Endothelial cell of umbilical vein (primary cell): ENCODE measurements at regions of chr2 and their contacts with region 1.

Region 1: DNA sequence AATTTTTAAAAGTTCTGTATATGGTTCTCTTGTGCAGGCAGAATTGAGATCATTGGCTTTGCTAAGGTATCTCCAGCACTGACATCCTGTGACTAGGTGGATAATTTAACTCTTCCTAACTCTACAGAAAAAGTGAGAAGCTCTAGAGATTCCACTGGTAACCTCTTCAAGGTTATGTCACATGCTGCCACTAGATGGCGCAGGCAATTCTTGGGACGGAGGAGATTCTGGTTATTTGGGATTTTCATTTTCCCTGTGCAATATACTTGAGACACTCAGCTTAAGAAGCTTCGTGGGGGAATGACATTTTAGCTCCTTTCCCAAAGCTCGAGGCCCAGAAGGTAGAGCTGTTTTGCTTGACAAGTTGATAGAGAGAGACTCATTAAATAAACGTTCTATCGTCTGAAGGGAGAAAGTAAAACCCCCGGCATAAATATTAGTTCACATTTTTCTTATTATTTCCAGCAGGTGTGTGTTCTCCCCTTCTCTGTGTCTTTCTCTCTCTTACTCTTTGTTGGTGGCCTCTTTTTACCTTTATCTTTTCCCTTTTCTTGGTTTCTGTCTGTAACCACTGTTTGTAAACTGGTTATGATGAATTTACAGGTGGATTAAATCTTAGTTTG is 26.6 kb upstream of the LANCL1 start:
- DNase-seq: peak; percentile 55
- H3K4me3 ChIP-seq: peak overlapping the region in 1 of 3 experiments; percentile 16
- H3K27ac ChIP-seq: no peak overlapping the region
- H3K4me1 ChIP-seq: no peaks in the 10 kb centered on the region
- H3K27me3 ChIP-seq: peaks cover 0 to 8% of the 10 kb centered on the region in 2 experiments
- CTCF ChIP-seq: peak; percentile 76 to 89
- POLR2A ChIP-seq: no peak

Region 2: GRCh38 chr2:210356944-210357343 is 146.2 kb before region 1 on chr2:
- CTCF ChIA-PET with region 1: no interaction called
- POLR2A ChIA-PET with region 1: no interaction called
- dilution Hi-C with region 1: no loop called
- intact Hi-C with region 1: no loop called
- DNase-seq: no peak
- H3K4me3 ChIP-seq: no peak overlapping the region
- H3K27ac ChIP-seq: no peak overlapping the region
- H3K4me1 ChIP-seq: no peaks in the 10 kb centered on the region
- H3K27me3 ChIP-seq: no peaks in the 10 kb centered on the region
- CTCF ChIP-seq: no peak
- POLR2A ChIP-seq: no peak

Region 3: GRCh38 chr2:210519594-210519993 is 16.5 kb after region 1 on chr2:
- CTCF ChIA-PET with region 1: interaction called, 12 read pairs
- POLR2A ChIA-PET with region 1: no interaction called
- dilution Hi-C with region 1: no loop called
- intact Hi-C with region 1: no loop called
- DNase-seq: no peak
- H3K4me3 ChIP-seq: no peak overlapping the region
- H3K27ac ChIP-seq: no peak overlapping the region
- H3K4me1 ChIP-seq: no peaks in the 10 kb centered on the region
- H3K27me3 ChIP-seq: no peaks in the 10 kb centered on the region
- CTCF ChIP-seq: no peak
- POLR2A ChIP-seq: no peak